ENCODE measurements at regions of chr1 and their contacts with region 1.

Region 1: DNA sequence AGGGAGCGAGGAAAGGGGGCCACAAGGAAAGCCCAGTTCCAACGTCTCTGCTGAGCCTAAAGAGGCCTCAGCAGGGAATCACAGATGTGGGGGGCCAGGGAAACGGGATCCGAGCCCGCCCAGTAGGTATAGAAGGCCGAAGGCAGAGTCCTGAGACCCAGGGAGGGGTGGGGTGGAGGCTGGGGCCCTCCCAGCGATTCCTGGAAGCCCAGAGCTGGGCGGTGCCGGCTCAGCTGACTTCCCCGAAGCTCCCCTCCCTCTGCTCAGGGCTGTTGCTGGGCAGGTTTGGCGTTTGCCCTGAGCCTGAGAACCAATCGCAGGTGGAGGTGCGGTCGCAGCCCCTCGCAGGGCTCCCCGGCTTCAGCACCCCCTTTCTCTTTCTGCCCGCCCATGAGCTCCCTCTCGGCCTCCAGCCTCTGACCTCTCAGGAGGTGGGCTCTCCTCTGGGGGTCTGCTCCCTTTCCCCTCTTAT is 12.8 kb downstream of the ADAMTSL4 start:
- DNase-seq: peak; percentile 77
- H3K4me3 ChIP-seq: peak overlapping the region; percentile 53
- H3K27ac ChIP-seq: peak overlapping the region; percentile 84
- H3K4me1 ChIP-seq: peaks cover 29% of the 10 kb centered on the region
- H3K27me3 ChIP-seq: no peaks in the 10 kb centered on the region
- CTCF ChIP-seq: no peak

Region 2: GRCh38 chr1:150259758-150260669 is 302.0 kb before region 1 on chr1:
- CTCF ChIA-PET with region 1: no interaction called
- POLR2A ChIA-PET with region 1: no interaction called
- intact Hi-C with region 1: loop called (anchors 1 kb)
- DNase-seq: peak; percentile 33
- H3K4me3 ChIP-seq: no peak overlapping the region
- H3K27ac ChIP-seq: no peak overlapping the region
- H3K4me1 ChIP-seq: peaks cover 47% of the 10 kb centered on the region
- H3K27me3 ChIP-seq: no peaks in the 10 kb centered on the region
- CTCF ChIP-seq: no peak

Region 3: GRCh38 chr1:150537732-150538684 is 24.0 kb before region 1 on chr1:
- CTCF ChIA-PET with region 1: interaction called, 10 read pairs
- POLR2A ChIA-PET with region 1: no interaction called
- intact Hi-C with region 1: no loop called
- DNase-seq: no peak
- H3K4me3 ChIP-seq: no peak overlapping the region
- H3K27ac ChIP-seq: no peak overlapping the region
- H3K4me1 ChIP-seq: no peaks in the 10 kb centered on the region
- H3K27me3 ChIP-seq: no peaks in the 10 kb centered on the region
- CTCF ChIP-seq: no peak

Region 4: GRCh38 chr1:150621497-150622302 is 59.7 kb after region 1 on chr1:
- CTCF ChIA-PET with region 1: interaction called, 10 read pairs
- POLR2A ChIA-PET with region 1: no interaction called
- intact Hi-C with region 1: loop called (anchors 5 kb)
- DNase-seq: peak; percentile 68
- H3K4me3 ChIP-seq: no peak overlapping the region
- H3K27ac ChIP-seq: no peak overlapping the region
- H3K4me1 ChIP-seq: peaks cover 20% of the 10 kb centered on the region
- H3K27me3 ChIP-seq: no peaks in the 10 kb centered on the region
- CTCF ChIP-seq: peak; percentile 73

Region 5: GRCh38 chr1:150808121-150808520 is 246.1 kb after region 1 on chr1 and contains the start of gene CTSK:
- CTCF ChIA-PET with region 1: no interaction called
- POLR2A ChIA-PET with region 1: no interaction called
- intact Hi-C with region 1: loop called (anchors 5 kb)
- DNase-seq: peak; percentile 2
- H3K4me3 ChIP-seq: no peak within 1 kb of the TSS
- H3K27ac ChIP-seq: peak within 1 kb of the TSS; percentile 84
- H3K4me1 ChIP-seq: peaks cover 21% of the 10 kb centered on the region
- H3K27me3 ChIP-seq: no peaks in the 10 kb centered on the region
- CTCF ChIP-seq: no peak
- total RNA-seq, gene CTSK: 12.3 and 14.3 TPM in 2 replicates

Region 6: DNA sequence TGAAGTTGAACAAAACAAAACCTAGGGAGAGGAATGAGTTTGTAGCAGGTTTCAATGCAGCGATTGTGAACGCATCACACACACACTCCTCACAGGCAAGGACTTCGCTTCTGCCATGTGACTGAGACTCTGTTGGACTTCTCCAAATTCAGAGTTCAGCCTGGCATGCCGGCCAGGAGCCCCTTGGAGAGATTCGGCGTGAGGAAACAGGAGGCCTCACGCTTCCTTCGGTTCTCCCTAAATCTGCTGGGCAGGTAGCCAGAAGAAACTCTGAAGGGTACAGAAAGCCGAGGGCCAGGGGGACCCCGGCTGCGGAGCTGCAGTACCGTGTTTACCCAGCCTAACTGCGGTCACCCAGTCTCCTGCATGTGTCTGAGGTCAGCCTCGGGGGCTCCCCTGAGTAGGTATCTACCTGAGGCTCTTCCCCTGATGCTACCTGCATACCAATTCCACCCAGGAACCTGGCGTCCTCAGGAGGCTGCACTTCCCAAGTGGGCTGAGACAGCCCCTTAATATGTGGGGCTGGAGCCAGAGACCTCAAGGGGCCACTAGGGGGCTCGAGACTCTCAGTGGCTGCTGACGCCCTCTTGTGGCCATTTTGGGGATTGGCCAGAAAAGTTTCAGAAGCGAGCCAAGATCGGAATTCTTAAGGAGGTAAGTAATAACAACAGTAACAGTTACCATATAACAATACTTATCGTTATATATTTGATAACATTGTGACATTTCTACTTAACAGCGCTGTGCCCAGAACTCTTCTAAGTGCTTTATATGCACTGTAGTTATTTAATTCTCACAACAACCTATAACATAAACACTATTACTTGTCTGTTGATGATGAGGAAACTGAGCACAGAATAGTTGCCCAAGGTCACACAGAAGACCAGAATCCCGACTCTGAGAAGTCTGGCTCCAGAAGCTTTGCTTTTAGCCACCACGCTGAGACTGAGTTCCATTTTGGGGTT is 417.4 kb after region 1 on chr1:
- CTCF ChIA-PET with region 1: no interaction called
- POLR2A ChIA-PET with region 1: no interaction called
- intact Hi-C with region 1: loop called (anchors 10 kb)
- DNase-seq: peak; percentile 95
- H3K4me3 ChIP-seq: no peak overlapping the region
- H3K27ac ChIP-seq: peak overlapping the region; percentile 33
- H3K4me1 ChIP-seq: peaks cover 32% of the 10 kb centered on the region
- H3K27me3 ChIP-seq: no peaks in the 10 kb centered on the region
- CTCF ChIP-seq: peak; percentile 100